HCT116 (cell line): ENCODE measurements at regions of chr11 and their contacts with region 1.

Region 1: DNA sequence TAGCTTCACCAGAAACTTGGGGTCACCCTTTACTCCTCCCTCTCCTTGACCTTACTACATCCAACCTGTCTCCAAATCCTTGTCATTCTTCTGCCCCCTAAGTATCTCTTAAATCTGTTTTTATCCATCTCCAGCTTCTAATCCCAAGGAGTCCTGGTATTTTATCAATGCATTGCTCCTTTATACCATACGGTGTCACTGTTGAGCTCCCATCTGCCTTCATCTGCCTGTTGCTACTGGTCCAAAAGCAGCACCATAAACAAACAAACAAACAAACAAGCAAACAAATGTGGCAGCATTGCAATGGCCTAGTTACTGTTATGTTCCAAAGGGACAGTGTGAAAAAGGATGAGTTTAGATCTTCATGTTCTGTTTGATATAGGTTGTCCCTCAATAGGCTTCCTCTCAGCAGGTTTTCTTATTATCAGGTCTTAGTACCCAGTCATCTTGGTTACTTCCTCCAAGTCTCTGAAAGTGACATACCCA is 34.2 kb downstream of the DNHD1 start:
- DNase-seq: peak; percentile 45
- ATAC-seq: peak; percentile 93
- H3K4me3 ChIP-seq: no peak overlapping the region
- H3K27ac ChIP-seq: no peak overlapping the region
- H3K4me1 ChIP-seq: no peaks in the 10 kb centered on the region
- H3K27me3 ChIP-seq: no peaks in the 10 kb centered on the region
- CTCF ChIP-seq: peak; percentile 72 to 86 (median 82)
- POLR2A ChIP-seq: no peak
- RAD21 ChIP-seq: peak; percentile 86

Region 2: DNA sequence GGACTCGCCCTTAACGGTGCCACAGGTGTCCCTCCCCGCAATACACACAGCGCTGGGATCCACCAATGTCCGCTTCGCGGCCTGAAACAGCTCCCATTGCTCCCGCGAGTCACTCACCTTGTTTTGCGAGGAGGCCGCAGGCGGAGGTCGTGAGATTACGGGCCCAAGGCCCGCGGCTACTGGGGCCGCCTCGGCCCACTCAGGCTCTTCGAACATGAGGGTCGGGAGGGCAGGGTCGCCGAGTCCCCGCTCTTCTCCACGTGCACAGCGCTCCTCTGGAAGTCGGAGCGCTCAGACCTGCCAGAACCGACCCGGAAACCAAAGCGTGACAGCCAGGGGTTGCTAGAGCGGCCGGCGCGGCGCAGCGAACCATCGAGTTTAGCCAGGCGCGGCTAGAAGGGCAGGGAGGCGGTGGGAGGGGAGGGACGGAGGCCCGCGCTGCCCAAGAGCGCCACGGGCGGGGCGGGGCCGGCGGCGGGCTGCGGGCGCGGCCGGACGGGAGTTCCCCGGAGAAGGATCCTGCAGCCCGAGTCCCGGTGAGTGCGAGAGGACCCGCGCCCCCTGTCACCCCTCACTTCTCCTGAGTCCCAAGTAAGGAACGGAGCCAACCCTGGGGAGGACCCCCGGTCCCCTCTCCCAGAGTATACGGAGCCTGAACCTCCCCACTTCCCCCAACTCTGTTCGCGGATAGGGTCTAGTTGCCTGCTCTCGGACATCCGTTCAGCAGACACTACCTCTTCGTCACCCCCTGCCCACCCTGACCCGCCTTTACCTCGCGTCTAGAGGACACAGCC is 72.2 kb after region 1 on chr11 and contains the starts of genes ILK and RRP8:
- CTCF ChIA-PET with region 1: interaction called, 3 read pairs
- POLR2A ChIA-PET with region 1: no interaction called
- RAD21 ChIA-PET with region 1: no interaction called
- intact Hi-C with region 1: loop called (anchors 5 kb)
- DNase-seq: peak; percentile 68
- ATAC-seq: peak; percentile 88
- H3K4me3 ChIP-seq: peak within 1 kb of the TSS; percentile 81 to 96
- H3K27ac ChIP-seq: peak within 1 kb of the TSS; percentile 66
- H3K4me1 ChIP-seq: peaks cover 18 to 45% of the 10 kb centered on the region in 2 experiments
- H3K27me3 ChIP-seq: no peaks in the 10 kb centered on the region
- CTCF ChIP-seq: no peak
- POLR2A ChIP-seq: peak; percentile 68
- RAD21 ChIP-seq: no peak
- total RNA-seq, gene ILK: 73.5 TPM
- total RNA-seq, gene RRP8: 17.8 TPM

Region 3: DNA sequence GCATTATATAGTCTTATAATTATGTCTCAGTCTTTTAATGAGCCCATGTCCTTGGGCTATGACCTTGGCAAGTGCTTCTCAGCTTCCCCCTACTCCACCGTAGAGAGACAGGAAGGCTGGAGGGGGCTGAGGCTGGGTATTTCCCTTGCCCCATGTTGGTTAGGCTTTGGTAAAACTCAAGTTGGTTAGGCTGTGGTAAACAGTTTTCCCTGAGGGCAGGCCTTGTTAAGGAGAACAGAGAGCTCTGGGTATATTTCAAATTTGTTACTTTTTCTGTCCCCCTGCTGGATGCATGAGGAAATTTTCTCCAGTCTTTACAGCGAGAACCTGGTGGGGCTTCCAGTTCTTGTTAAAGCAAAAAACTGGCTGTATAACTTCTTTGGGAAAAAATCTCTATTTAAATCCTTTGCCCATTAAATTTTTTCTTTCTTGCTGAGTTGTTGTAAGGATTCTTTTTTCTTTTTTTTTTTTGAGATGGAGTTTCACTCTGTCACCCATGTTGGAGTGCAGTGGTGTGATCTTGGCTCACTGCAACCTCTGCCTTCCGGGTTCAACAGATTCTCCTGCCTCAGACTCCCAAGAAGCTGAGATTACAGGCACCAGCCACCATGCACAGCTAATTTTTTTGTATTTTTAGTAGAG is 136.5 kb after region 1 on chr11:
- CTCF ChIA-PET with region 1: interaction called, 10 read pairs
- POLR2A ChIA-PET with region 1: no interaction called
- RAD21 ChIA-PET with region 1: interaction called in 1 of 2 experiments, 6 read pairs
- intact Hi-C with region 1: no loop called
- DNase-seq: peak; percentile 38
- ATAC-seq: peak; percentile 94
- H3K4me3 ChIP-seq: no peak overlapping the region
- H3K27ac ChIP-seq: no peak overlapping the region
- H3K4me1 ChIP-seq: peaks cover 0 to 4% of the 10 kb centered on the region in 2 experiments; a peak in 2 of 4 replicates
- H3K27me3 ChIP-seq: no peaks in the 10 kb centered on the region
- CTCF ChIP-seq: peak; percentile 61 to 63 (median 63); a peak in 5 of 6 replicates
- POLR2A ChIP-seq: no peak
- RAD21 ChIP-seq: peak; percentile 49

Region 4: GRCh38 chr11:6705905-6706535 is 174.7 kb after region 1 on chr11:
- CTCF ChIA-PET with region 1: interaction called, 12 read pairs
- POLR2A ChIA-PET with region 1: no interaction called
- RAD21 ChIA-PET with region 1: no interaction called
- intact Hi-C with region 1: loop called (anchors 1 kb)
- DNase-seq: no peak
- ATAC-seq: peak; percentile 71
- H3K4me3 ChIP-seq: no peak overlapping the region
- H3K27ac ChIP-seq: no peak overlapping the region
- H3K4me1 ChIP-seq: no peaks in the 10 kb centered on the region
- H3K27me3 ChIP-seq: no peaks in the 10 kb centered on the region
- CTCF ChIP-seq: peak; percentile 80 to 93 (median 90)
- POLR2A ChIP-seq: no peak
- RAD21 ChIP-seq: peak; percentile 76